A549 (cell line): ENCODE measurements at regions of chr16 and their contacts with region 1.

Region 1: GRCh38 chr16:86519649-86520316 is 9.5 kb downstream of the FOXF1 start:
- DNase-seq: peak; percentile 53 to 77
- ATAC-seq: peak; percentile 26 to 70; a peak in 3 of 6 replicates
- H3K4me3 ChIP-seq: peak overlapping the region; percentile 21; the same call in 1 of the 3 replicates
- H3K27ac ChIP-seq: no peak overlapping the region
- H3K4me1 ChIP-seq: no peaks in the 10 kb centered on the region
- CTCF ChIP-seq: peak; percentile 94
- EP300 ChIP-seq: no peak
- POLR2A ChIP-seq: no peak
- RAD21 ChIP-seq: peak; percentile 82 to 85

Region 2: GRCh38 chr16:86029131-86029741 is 490.5 kb before region 1 on chr16:
- CTCF ChIA-PET with region 1: interaction called, 10 read pairs
- POLR2A ChIA-PET with region 1: no interaction called
- DNase-seq: no peak
- ATAC-seq: peak in 1 of 2 experiments; percentile 15; a peak in 1 of 6 replicates
- H3K4me3 ChIP-seq: no peak overlapping the region
- H3K27ac ChIP-seq: no peak overlapping the region
- H3K4me1 ChIP-seq: no peaks in the 10 kb centered on the region
- CTCF ChIP-seq: no peak
- EP300 ChIP-seq: no peak
- POLR2A ChIP-seq: no peak
- RAD21 ChIP-seq: no peak

Region 3: DNA sequence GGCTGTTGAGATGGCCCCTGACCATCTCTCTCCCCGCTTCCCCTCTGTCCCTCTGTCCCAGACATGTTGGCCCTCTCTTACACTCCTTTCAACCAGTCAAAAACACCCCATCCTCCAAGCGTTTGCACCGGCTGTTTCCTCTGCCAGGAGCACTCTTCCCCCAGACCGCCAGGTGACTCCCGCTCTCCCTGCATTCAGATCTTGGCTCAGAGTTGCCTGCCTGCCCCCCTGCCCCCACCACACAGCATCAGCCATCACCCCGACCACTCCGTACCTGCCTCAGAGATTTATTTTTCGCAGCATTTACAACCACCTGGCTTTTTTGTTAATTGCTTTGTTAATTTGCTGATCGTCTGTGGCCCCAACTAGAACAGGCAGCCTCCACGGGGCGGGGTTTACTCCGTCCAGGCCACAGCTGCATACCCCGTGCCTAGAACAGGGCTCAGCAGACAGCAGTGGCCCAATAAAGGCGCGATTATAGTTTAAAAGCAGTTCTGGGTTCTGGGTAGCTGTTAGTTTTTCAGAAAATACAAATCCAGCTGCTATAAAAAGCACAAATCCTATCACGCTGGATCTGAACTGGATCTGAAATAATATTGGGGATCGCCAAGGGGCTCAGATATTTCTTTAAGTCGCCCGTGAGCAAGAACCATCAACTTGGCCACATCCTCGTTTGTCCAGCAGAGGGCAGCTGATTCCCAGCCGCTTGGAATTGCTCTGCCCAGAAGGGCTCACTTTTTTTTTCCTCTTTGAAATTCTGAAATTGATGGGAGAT is 447.3 kb before region 1 on chr16:
- CTCF ChIA-PET with region 1: interaction called, 321 read pairs
- POLR2A ChIA-PET with region 1: no interaction called
- DNase-seq: peak; percentile 64 to 70
- ATAC-seq: peak in 1 of 2 experiments; percentile 86; a peak in 4 of 6 replicates
- H3K4me3 ChIP-seq: no peak overlapping the region
- H3K27ac ChIP-seq: no peak overlapping the region
- H3K4me1 ChIP-seq: no peaks in the 10 kb centered on the region
- CTCF ChIP-seq: peak; percentile 85
- EP300 ChIP-seq: no peak
- POLR2A ChIP-seq: no peak
- RAD21 ChIP-seq: peak; percentile 75 to 82

Region 4: GRCh38 chr16:86300746-86301481 is 218.9 kb before region 1 on chr16:
- CTCF ChIA-PET with region 1: interaction called, 10 read pairs
- POLR2A ChIA-PET with region 1: no interaction called
- DNase-seq: no peak
- ATAC-seq: no peak
- H3K4me3 ChIP-seq: no peak overlapping the region
- H3K27ac ChIP-seq: no peak overlapping the region
- H3K4me1 ChIP-seq: no peaks in the 10 kb centered on the region
- CTCF ChIP-seq: no peak
- EP300 ChIP-seq: no peak
- POLR2A ChIP-seq: no peak
- RAD21 ChIP-seq: no peak

Region 5: DNA sequence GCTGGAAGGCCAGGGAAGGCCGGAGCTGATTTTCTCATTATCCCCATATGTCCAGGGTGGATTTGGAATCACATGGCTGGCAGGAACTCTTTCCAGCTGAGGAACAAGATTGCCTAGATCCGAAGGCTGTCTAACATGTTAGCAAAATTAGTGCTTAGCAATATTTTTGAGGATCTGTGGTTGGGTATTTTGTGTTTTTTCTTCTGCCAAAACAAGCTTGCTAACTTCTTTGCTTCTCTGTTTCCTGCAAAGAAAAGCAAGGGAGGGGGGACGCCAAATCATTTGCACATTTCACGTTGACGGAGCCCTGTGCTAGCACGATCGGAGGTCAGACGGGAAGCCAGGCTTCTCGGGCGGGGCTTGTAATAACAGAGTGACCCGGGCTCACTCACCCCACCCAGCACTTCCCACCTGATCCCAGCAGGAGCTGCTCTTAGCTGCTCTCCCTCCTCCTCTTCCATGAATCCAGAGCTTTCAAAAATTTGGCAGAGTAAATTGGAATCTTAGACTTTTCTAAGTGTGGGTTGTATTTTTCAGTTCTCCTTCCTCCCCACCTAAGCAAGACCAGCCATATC is 42.7 kb before region 1 on chr16:
- CTCF ChIA-PET with region 1: interaction called, 32 read pairs
- POLR2A ChIA-PET with region 1: no interaction called
- DNase-seq: no peak
- ATAC-seq: no peak
- H3K4me3 ChIP-seq: no peak overlapping the region
- H3K27ac ChIP-seq: no peak overlapping the region
- H3K4me1 ChIP-seq: no peaks in the 10 kb centered on the region
- CTCF ChIP-seq: no peak
- EP300 ChIP-seq: no peak
- POLR2A ChIP-seq: no peak
- RAD21 ChIP-seq: no peak

Region 6: DNA sequence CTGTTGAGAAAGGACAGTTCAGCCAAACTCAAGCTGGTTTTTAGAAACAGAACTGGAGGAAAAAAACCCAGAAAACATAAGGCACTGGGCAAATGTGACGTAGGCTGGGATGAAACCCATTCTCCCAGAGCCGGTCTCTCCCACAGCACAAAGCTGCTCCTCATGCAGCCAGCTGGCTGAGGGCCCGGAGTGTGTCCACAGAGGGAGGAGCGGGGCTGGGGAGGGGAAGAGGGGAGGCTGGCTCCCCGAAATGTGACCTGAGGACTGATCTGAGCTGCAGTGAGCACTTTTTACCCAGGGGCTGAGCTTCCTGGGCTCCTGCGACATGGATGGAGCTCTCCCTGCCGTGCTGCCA is 11.4 kb after region 1 on chr16:
- CTCF ChIA-PET with region 1: interaction called, 66 read pairs
- POLR2A ChIA-PET with region 1: no interaction called
- DNase-seq: no peak
- ATAC-seq: no peak
- H3K4me3 ChIP-seq: no peak overlapping the region
- H3K27ac ChIP-seq: no peak overlapping the region
- H3K4me1 ChIP-seq: no peaks in the 10 kb centered on the region
- CTCF ChIP-seq: no peak
- EP300 ChIP-seq: no peak
- POLR2A ChIP-seq: no peak
- RAD21 ChIP-seq: no peak

Region 7: GRCh38 chr16:86640265-86640843 is 120.6 kb after region 1 on chr16:
- CTCF ChIA-PET with region 1: no interaction called
- POLR2A ChIA-PET with region 1: no interaction called
- DNase-seq: no peak
- ATAC-seq: no peak; a peak in 1 of 6 replicates
- H3K4me3 ChIP-seq: no peak overlapping the region
- H3K27ac ChIP-seq: no peak overlapping the region
- H3K4me1 ChIP-seq: no peaks in the 10 kb centered on the region
- CTCF ChIP-seq: no peak
- EP300 ChIP-seq: no peak
- POLR2A ChIP-seq: no peak
- RAD21 ChIP-seq: no peak